Left cardiac atrium (tissue), 4 donors: ENCODE measurements at regions of chr1 and their contacts with region 1.

Region 1: DNA sequence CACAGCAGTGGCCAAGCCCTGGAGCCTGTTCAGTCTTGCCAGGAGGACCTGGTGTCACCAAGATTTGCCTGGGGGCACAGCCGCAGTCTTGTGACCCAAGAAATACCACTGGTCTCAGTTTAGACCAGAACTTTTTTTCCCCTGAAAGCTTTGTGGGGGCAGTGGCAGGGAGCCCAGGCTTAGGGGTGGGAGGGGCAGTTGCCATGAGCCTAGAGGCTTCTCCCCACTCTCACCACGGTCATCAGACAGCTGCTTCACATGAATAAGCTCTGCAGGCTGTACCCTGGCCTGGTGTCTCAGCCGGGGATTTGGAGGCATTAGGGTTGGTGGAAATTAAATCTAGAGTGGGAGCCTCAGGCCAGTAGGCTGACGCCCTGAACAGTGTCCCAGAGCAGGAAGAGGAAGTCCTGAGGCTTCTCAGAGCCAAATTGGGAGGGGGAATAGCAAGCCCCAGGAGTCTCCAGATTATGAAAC is 73.7 kb downstream of the SLC16A1 start:
- DNase-seq: no peak
- ATAC-seq: peak; percentile 41 to 60

Region 2: GRCh38 chr1:112722601-112723510 is 159.5 kb before region 1 on chr1:
- intact Hi-C with region 1: loop called in 1 of 2 experiments (anchors 10 kb)
- DNase-seq: no peak
- ATAC-seq: peak; percentile 27 to 55

Region 3: DNA sequence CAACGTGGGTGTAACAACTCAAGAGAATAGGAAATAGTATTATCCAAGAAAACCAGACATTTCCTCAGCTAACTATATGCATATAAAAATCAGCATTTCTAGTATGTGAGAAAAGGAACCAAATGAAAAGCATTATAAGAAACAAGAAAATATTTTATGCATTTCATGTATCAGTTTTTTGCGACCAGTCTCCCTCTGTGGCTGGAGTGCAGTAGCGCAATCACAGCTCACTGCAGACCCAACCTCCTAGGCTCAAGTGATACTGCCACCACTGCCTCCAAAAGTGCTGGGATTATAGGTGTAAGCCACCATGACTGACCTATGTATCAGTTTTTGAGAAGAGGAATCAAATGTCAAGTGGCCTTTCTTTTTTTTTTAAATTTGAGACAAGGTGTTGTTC is 42.7 kb after region 1 on chr1:
- intact Hi-C with region 1: no loop called
- DNase-seq: no peak
- ATAC-seq: no peak

Region 4: GRCh38 chr1:112955781-112956543 is 73.7 kb after region 1 on chr1 and contains the start of gene SLC16A1:
- intact Hi-C with region 1: loop called (anchors 5 to 10 kb)
- DNase-seq: peak; percentile 95
- ATAC-seq: peak; percentile 94 to 97
- total RNA-seq, gene SLC16A1: 54.0 to 80.0 TPM

Region 5: DNA sequence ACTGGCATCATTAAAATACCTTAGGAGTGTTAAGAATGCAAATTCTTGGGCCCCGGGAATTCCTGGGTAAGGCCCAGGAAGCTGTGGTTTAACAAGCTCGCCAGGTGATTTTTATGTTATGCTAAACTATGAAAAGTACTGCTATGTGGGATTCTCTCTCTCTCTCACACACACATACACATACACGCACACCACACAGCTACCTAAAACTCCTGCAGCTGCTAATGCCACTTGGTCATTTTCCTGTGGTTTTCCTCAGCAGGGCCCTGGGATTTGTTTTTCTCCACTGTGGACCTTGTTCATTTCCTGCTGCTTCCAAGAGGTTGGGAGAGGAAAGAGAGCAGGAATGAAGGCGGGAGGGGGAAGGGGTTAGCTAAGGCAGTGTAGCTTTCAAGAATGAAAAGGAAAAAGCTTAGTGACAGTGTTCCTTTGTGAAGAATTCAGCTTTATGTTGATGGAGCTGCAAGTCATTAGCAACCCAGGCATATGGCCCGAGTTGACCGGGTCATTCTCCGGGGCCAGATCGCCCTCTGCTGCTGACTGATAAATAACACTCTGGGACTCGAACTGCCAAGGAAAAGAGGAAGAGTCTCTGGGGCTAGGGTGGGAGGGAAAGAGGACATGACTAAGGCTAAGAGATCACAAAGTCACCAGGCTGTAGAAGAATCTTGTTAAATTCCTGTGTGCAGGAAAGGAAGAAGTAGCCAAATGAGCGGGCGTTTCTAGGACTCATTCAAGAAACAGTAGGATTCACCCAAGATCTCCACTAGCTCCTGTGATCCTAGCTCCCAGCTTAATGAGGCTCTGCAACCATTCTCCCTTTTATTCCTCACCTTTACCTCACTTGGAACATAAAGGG is 160.2 kb after region 1 on chr1:
- intact Hi-C with region 1: loop called (anchors 2 to 5 kb)
- DNase-seq: peak; percentile 81
- ATAC-seq: peak; percentile 89 to 93